ENCODE measurements at regions of chr2 and their contacts with region 1.

Region 1: DNA sequence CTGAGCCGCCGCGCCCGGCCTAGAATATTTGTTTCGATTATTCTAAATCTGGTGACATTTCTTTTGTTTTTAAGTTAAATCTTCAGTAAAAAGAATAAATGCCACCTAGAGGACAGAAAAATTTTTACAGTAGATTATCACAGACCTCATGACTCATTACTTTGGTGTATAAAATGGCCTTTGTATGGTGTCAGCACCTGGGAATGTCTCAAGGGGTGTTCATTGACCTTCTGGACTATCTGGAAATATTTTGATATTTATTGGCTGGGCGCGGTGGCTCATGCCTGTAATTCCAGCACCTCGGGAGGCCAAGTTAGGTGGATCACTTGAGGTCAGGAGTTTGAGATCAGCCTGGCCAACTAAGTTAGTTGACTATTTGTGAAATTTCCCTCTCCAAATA is 30.3 kb upstream of the SLC30A6 start:
- DNase-seq: peak; percentile 28
- H3K4me3 ChIP-seq: no peak overlapping the region
- CTCF ChIP-seq: no peak

Region 2: DNA sequence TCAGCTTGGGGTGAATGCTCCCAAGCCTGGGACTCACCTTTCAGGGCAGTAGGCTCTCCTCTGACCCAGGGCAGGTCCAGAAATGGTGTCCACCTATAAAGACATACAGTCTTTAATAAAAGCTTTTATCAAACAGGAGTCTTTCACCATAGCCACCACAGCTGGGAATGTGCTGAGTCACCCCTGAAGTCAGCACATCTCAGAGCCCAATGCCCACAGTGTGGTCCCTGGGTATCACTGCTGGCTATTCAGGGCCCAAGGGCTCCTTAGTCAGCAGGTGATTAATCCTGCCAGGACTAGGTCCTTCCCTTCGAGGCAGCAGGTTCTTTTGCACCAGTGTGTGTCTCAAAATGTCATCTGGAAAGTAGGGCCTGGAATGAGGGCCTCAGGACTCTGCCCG is 306.5 kb before region 1 on chr2:
- CTCF ChIA-PET with region 1: no interaction called
- POLR2A ChIA-PET with region 1: no interaction called
- DNase-seq: no peak
- H3K4me3 ChIP-seq: no peak overlapping the region
- CTCF ChIP-seq: no peak

Region 3: GRCh38 chr2:32095671-32096070 is 39.7 kb before region 1 on chr2:
- CTCF ChIA-PET with region 1: no interaction called
- POLR2A ChIA-PET with region 1: no interaction called
- DNase-seq: no peak
- H3K4me3 ChIP-seq: no peak overlapping the region
- CTCF ChIP-seq: no peak

Region 4: DNA sequence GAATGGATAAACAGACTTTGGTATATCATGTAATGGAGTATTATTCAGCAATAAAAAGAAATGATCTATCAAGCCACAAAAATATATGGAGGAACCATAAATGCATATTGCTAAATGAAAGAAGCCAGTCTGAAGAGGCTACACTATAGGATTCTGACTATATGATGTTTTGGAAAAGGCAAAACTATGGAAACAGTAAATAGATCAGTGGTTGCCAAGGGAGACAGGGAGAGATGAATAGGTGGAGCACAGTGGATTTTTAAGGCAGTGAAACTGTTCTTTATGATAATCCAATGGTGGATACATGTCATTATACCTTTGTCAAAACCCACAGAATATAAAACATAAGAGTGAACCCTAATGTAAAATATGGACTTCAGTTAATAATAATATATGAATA is 10.7 kb before region 1 on chr2:
- CTCF ChIA-PET with region 1: interaction called, 10 read pairs
- POLR2A ChIA-PET with region 1: no interaction called
- DNase-seq: no peak
- H3K4me3 ChIP-seq: no peak overlapping the region
- CTCF ChIP-seq: no peak

Region 5: GRCh38 chr2:32532961-32533360 is 397.6 kb after region 1 on chr2:
- CTCF ChIA-PET with region 1: no interaction called
- POLR2A ChIA-PET with region 1: no interaction called
- DNase-seq: no peak
- H3K4me3 ChIP-seq: no peak overlapping the region
- CTCF ChIP-seq: no peak